Mammary epithelial cell (primary cell): ENCODE measurements at regions of chr7 and their contacts with region 1.

Region 1: DNA sequence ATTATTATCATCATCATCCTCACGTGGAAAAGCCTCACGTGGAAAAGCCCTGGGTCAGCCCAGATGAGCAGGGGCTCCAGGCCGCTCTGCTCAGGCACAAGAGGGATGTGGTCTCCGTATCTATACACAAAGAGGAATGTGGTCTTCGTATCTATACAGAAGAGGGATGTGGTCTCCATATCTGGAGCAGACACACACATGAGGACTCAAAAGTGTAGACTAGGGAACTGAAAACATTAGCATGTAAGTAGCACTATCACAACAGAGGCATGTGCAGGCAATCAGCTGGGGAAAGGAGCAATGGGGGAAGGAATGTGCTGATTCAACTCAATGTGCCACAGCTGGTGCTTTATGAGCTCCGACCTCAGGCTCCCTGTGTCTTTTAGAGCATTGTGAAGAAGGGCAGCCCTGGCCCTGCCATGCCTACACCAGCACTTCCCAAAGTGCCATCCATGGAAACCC is 86.5 kb downstream of the PLXNA4 start:
- DNase-seq: no peak
- H3K4me3 ChIP-seq: no peak overlapping the region
- H3K27ac ChIP-seq: no peak overlapping the region
- H3K4me1 ChIP-seq: no peaks in the 10 kb centered on the region
- H3K27me3 ChIP-seq: no peaks in the 10 kb centered on the region
- CTCF ChIP-seq: no peak

Region 2: DNA sequence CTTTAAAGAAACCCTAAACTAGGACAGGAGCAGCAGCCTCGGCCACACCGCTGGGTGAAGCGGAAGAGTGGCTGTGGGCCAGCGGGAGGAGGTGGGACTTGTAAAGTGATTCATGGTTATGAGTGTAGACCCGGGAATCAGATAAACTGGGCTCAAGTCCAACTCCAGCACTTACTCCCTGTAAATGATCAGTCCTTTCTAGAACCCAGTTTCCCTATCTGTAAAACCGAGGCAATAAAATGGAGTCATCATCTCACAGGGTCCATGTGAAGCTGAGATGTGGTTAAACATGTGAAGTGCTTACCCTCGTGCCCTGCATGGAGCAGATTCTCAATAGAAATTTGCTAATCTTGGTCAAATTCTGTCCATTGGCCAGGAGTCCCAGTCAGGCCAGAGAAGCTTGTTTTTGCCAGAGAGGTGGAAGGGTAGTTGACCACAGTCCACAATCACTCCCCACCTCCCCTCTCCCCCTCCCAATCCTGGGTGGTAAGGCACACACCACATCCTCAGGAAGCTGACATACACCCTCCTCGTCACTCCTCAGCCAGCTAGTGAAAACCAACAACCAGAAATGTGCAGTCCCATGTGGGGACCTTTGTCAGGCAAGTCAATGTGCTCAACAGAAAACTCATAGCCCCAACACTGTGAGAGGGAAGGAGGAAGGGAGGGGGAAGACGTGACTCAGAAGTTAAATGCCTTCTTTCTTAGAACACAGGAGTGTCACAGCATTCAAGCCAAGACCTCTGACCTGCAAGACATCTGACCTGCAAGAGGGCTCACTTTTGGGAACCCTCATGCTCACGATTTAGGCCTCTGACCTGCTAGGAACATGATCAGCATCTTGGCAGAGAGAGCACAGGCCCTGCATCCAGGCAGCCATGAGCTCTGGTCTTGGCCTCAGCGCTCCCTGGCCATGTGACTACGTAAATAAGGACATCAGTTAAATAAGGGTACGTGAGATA is 58.7 kb before region 1 on chr7:
- CTCF ChIA-PET with region 1: no interaction called
- dilution Hi-C with region 1: loop called (anchors 5 kb)
- in situ Hi-C with region 1: no loop called
- intact Hi-C with region 1: no loop called
- DNase-seq: peak; percentile 25
- H3K4me3 ChIP-seq: no peak overlapping the region
- H3K27ac ChIP-seq: no peak overlapping the region
- H3K4me1 ChIP-seq: no peaks in the 10 kb centered on the region
- H3K27me3 ChIP-seq: peaks cover 2% of the 10 kb centered on the region
- CTCF ChIP-seq: no peak

Region 3: GRCh38 chr7:132451161-132451560 is 38.6 kb before region 1 on chr7:
- CTCF ChIA-PET with region 1: no interaction called
- dilution Hi-C with region 1: no loop called
- in situ Hi-C with region 1: no loop called
- intact Hi-C with region 1: no loop called
- DNase-seq: no peak
- H3K4me3 ChIP-seq: no peak overlapping the region
- H3K27ac ChIP-seq: no peak overlapping the region
- H3K4me1 ChIP-seq: no peaks in the 10 kb centered on the region
- H3K27me3 ChIP-seq: no peaks in the 10 kb centered on the region
- CTCF ChIP-seq: no peak